A549 (cell line): ENCODE measurements at regions of chr12 and their contacts with region 1.

Region 1: GRCh38 chr12:130013771-130014484 is 110.1 kb upstream of the TMEM132D start:
- DNase-seq: peak; percentile 56 to 60
- ATAC-seq: peak; percentile 91 to 97
- H3K4me3 ChIP-seq: no peak overlapping the region
- H3K27ac ChIP-seq: no peak overlapping the region
- H3K4me1 ChIP-seq: no peaks in the 10 kb centered on the region
- CTCF ChIP-seq: peak; percentile 52
- EP300 ChIP-seq: no peak
- POLR2A ChIP-seq: no peak
- RAD21 ChIP-seq: peak; percentile 62 to 63

Region 2: GRCh38 chr12:130031571-130032189 is 17.8 kb after region 1 on chr12:
- CTCF ChIA-PET with region 1: interaction called, 22 read pairs
- POLR2A ChIA-PET with region 1: no interaction called
- DNase-seq: peak; percentile 57 to 61
- ATAC-seq: peak; percentile 71 to 93; a peak in 5 of 6 replicates
- H3K4me3 ChIP-seq: no peak overlapping the region
- H3K27ac ChIP-seq: no peak overlapping the region
- H3K4me1 ChIP-seq: no peaks in the 10 kb centered on the region
- CTCF ChIP-seq: peak; percentile 80
- EP300 ChIP-seq: no peak
- POLR2A ChIP-seq: no peak
- RAD21 ChIP-seq: peak; percentile 25 to 46; a peak in 2 of 5 replicates